Endothelial cell of umbilical vein (primary cell): ENCODE measurements at regions of chrX and their contacts with region 1.

Region 1: DNA sequence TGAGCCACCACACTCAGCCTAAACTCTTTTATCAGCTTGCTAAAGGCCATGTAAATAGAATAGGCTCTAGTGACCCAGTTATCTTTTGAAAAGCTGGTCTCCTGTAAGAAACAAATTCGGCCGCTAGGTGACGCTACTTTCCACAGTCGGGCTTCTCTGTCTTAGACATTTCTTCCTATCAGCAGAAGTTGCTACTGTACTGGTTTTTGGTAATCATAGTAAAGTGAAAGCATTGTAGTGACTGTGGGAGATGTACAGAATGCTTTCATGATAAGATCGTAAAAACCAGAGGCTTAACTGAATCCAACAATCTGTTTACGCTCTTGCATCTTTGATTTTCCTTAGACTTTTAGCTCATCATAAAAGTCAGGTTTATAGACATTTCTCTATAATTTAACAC is 82.6 kb downstream of the GK start:
- DNase-seq: peak; percentile 57
- H3K4me3 ChIP-seq: no peak overlapping the region
- H3K27ac ChIP-seq: no peak overlapping the region
- H3K4me1 ChIP-seq: no peaks in the 10 kb centered on the region
- H3K27me3 ChIP-seq: no peaks in the 10 kb centered on the region
- CTCF ChIP-seq: peak; percentile 38 to 58
- POLR2A ChIP-seq: no peak

Region 2: GRCh38 chrX:30812326-30812725 is 76.5 kb after region 1 on chrX:
- CTCF ChIA-PET with region 1: no interaction called
- POLR2A ChIA-PET with region 1: no interaction called
- dilution Hi-C with region 1: no loop called
- intact Hi-C with region 1: no loop called
- DNase-seq: no peak
- H3K4me3 ChIP-seq: no peak overlapping the region
- H3K27ac ChIP-seq: no peak overlapping the region
- H3K4me1 ChIP-seq: no peaks in the 10 kb centered on the region
- H3K27me3 ChIP-seq: no peaks in the 10 kb centered on the region
- CTCF ChIP-seq: no peak
- POLR2A ChIP-seq: no peak

Region 3: GRCh38 chrX:30889147-30890140 is 153.6 kb after region 1 on chrX and contains the start of gene TAB3:
- CTCF ChIA-PET with region 1: no interaction called
- POLR2A ChIA-PET with region 1: no interaction called
- dilution Hi-C with region 1: no loop called
- intact Hi-C with region 1: loop called (anchors 10 kb)
- DNase-seq: peak; percentile 97
- H3K4me3 ChIP-seq: peak within 1 kb of the TSS; percentile 20 to 91 (median 86)
- H3K27ac ChIP-seq: peak within 1 kb of the TSS; percentile 22
- H3K4me1 ChIP-seq: peaks cover 2% of the 10 kb centered on the region
- H3K27me3 ChIP-seq: no peaks in the 10 kb centered on the region
- CTCF ChIP-seq: no peak
- POLR2A ChIP-seq: peak; percentile 55
- total RNA-seq, gene TAB3: 11.7 and 12.0 TPM in 2 replicates